ENCODE measurements at regions of chr15 and their contacts with region 1.

Region 1: DNA sequence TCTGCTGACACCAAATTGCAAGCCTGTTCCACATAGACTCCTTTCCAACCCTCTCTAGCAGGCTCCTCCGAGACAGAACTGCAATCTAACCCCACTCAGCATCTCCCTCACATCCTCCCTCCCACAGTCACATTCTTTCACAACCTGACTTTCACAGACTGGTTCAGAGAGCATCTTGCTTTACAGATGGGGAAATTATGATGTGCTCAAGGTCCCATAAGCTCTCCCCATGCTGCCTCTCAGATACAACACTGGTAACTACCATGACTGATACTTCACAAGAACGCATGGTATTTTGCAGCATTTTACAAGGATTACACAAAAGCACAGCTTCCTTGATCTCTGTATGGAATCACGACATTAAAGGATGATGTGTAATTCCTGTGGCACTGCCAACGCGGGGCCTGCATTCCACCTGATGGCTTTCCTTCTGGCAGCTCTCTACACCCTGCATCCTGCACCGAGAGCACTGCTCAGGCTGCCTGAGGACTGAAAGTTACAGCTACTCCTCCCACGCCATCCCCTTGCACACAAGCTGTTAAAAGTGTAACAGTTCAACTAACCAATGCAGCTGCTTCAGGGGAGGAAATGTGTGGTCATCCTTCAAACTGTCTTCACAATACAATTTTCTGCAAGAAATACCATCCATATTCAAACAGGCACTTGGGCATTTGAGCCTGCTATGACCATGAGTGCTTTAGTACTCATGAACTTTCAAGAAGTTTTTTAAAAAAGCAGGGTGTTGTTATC is 27.6 kb downstream of the TBC1D2B start:
- DNase-seq: peak; percentile 71
- H3K4me3 Mint-ChIP-seq: peak overlapping the region; percentile 18
- H3K27ac Mint-ChIP-seq: peak overlapping the region; percentile 93
- H3K4me1 Mint-ChIP-seq: peaks cover 91% of the 10 kb centered on the region
- H3K27me3 Mint-ChIP-seq: no peaks in the 10 kb centered on the region

Region 2: GRCh38 chr15:77889009-77889806 is 160.7 kb before region 1 on chr15:
- CTCF ChIA-PET with region 1: no interaction called
- DNase-seq: no peak
- H3K4me3 Mint-ChIP-seq: no peak overlapping the region
- H3K27ac Mint-ChIP-seq: no peak overlapping the region
- H3K4me1 Mint-ChIP-seq: no peaks in the 10 kb centered on the region
- H3K27me3 Mint-ChIP-seq: peaks cover 33% of the 10 kb centered on the region

Region 3: GRCh38 chr15:78061963-78062435 is 12.1 kb after region 1 on chr15:
- CTCF ChIA-PET with region 1: interaction called, 69 read pairs
- DNase-seq: peak; percentile 68
- H3K4me3 Mint-ChIP-seq: peak overlapping the region; percentile 60
- H3K27ac Mint-ChIP-seq: peak overlapping the region; percentile 95
- H3K4me1 Mint-ChIP-seq: peaks cover 36% of the 10 kb centered on the region
- H3K27me3 Mint-ChIP-seq: no peaks in the 10 kb centered on the region

Region 4: GRCh38 chr15:78077058-78077877 is 27.4 kb after region 1 on chr15 and contains the start of gene TBC1D2B:
- CTCF ChIA-PET with region 1: interaction called, 69 read pairs
- DNase-seq: peak; percentile 79
- H3K4me3 Mint-ChIP-seq: peak within 1 kb of the TSS; percentile 99
- H3K27ac Mint-ChIP-seq: peak within 1 kb of the TSS; percentile 92
- H3K4me1 Mint-ChIP-seq: peaks cover 48% of the 10 kb centered on the region
- H3K27me3 Mint-ChIP-seq: no peaks in the 10 kb centered on the region

Measured in activated naive CD4-positive, alpha-beta T cell treated with anti-CD3 and anti-CD28 coated beads, Interleukin-2, amount 10 ng/mL, durations not matched to agents 7 days and 5 days (primary cell).